ENCODE measurements at regions of chr15 and their contacts with region 1.

Region 1: GRCh38 chr15:99755692-99756409 is 22.6 kb upstream of the LYSMD4 start:
- DNase-seq: peak in 3 of 5 donors; percentile 42 to 59 (median 47)
- H3K4me3 ChIP-seq: no peak overlapping the region
- H3K4me3 Mint-ChIP-seq: no peak overlapping the region
- H3K27ac ChIP-seq: no peak overlapping the region
- H3K27ac Mint-ChIP-seq: no peak overlapping the region
- H3K4me1 ChIP-seq: peaks cover 4% of the 10 kb centered on the region
- H3K4me1 Mint-ChIP-seq: peaks cover 0 to 6% (median 3%) of the 10 kb centered on the region in 3 donors
- H3K27me3 ChIP-seq: no peaks in the 10 kb centered on the region
- H3K27me3 Mint-ChIP-seq: peaks cover 0 to 4% of the 10 kb centered on the region in 2 donors

Region 2: GRCh38 chr15:99275525-99276128 is 480.2 kb before region 1 on chr15:
- CTCF ChIA-PET with region 1: interaction called, 18 read pairs
- POLR2A ChIA-PET with region 1: no interaction called
- DNase-seq: no peak
- H3K4me3 ChIP-seq: no peak overlapping the region
- H3K4me3 Mint-ChIP-seq: no peak overlapping the region
- H3K27ac ChIP-seq: no peak overlapping the region
- H3K27ac Mint-ChIP-seq: no peak overlapping the region
- H3K4me1 ChIP-seq: no peaks in the 10 kb centered on the region
- H3K4me1 Mint-ChIP-seq: peaks cover 12 to 19% (median 18%) of the 10 kb centered on the region in 3 donors
- H3K27me3 ChIP-seq: no peaks in the 10 kb centered on the region
- H3K27me3 Mint-ChIP-seq: no peaks in the 10 kb centered on the region

Region 3: DNA sequence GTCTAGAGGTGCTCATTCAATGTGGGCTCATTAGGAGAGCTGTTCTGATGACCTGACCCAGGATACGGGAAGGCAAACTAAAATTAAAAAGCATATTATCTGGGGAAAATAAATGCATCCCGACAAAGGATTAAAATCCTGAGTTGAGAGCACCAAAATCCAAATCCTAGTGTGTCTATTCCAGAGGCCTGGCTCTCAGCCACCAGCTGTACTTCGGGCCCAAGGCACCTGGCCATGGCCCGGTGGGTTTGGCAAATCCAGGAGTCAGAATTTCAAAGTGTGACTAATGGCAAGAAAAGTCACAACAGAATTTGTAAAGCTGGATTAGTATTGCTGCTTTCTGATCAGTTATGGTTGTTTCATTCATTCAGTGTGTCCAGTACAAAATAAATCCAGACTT is 20.0 kb before region 1 on chr15:
- CTCF ChIA-PET with region 1: interaction called, 10 read pairs
- POLR2A ChIA-PET with region 1: interaction called, 4 read pairs
- DNase-seq: no peak
- H3K4me3 ChIP-seq: no peak overlapping the region
- H3K4me3 Mint-ChIP-seq: peak overlapping the region in 1 of 7 donors; percentile 72
- H3K27ac ChIP-seq: no peak overlapping the region
- H3K27ac Mint-ChIP-seq: no peak overlapping the region
- H3K4me1 ChIP-seq: peaks cover 11% of the 10 kb centered on the region
- H3K4me1 Mint-ChIP-seq: peaks cover 11 to 22% (median 13%) of the 10 kb centered on the region in 3 donors
- H3K27me3 ChIP-seq: no peaks in the 10 kb centered on the region
- H3K27me3 Mint-ChIP-seq: peaks cover 0 to 2% of the 10 kb centered on the region in 2 donors

Region 4: DNA sequence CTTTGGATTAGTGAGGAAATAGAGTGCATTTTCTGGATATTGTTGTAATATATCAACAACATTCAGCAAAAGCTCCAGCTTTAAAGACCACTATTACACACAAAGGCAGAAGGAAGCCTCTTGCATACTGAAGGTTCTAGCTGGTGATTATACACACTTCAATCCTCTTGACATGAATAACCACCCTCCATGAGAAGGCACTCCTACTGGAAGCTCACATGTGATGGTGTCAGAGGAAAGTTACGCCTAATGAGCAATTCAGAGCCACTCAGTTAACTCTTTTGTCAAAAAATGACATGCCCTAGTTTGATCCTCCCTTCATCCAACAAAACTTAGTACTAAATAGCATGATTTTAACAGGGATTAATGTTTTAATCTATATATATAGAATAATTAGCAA is 102.0 kb after region 1 on chr15:
- CTCF ChIA-PET with region 1: no interaction called
- POLR2A ChIA-PET with region 1: no interaction called
- DNase-seq: no peak
- H3K4me3 ChIP-seq: no peak overlapping the region
- H3K4me3 Mint-ChIP-seq: no peak overlapping the region
- H3K27ac ChIP-seq: no peak overlapping the region
- H3K27ac Mint-ChIP-seq: no peak overlapping the region
- H3K4me1 ChIP-seq: no peaks in the 10 kb centered on the region
- H3K4me1 Mint-ChIP-seq: no peaks in the 10 kb centered on the region
- H3K27me3 ChIP-seq: no peaks in the 10 kb centered on the region
- H3K27me3 Mint-ChIP-seq: peaks cover 0 to 1% of the 10 kb centered on the region in 2 donors